HEK293 (cell line): ENCODE measurements at regions of chr14 and their contacts with region 1.

Region 1: DNA sequence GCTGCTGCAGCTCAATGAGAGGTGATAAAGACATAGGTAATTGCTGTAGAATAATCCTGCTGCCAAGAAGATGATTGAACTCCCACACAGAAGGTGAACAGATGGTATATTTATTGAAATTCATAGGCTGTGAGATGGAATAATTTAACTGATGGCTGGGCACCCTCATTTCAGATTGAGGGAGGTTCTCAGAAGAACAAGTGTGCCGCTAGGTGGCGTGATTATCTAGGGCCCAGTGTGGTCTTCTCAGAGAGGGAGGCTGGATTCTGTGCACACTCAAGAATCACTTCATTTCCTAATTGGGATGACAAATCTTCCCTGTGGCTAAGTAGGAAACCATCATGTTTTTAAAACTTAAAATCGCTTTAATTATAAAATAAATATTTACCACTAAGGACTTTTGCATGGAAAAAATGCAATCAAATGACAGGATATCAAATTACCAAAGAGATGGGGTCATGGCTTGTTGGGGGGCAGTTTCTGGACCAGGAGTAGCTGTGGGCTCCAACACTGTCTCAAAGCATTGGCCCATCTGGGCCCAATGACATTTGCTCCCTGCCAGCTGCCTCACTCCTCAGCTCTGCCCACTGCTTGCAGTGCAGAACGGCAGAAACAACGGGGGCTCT is 132.3 kb downstream of the SNAPC1 start:
- H3K4me3 ChIP-seq: no peak overlapping the region
- H3K27ac ChIP-seq: no peak overlapping the region
- H3K4me1 ChIP-seq: no peaks in the 10 kb centered on the region
- CTCF ChIP-seq: no peak

Region 2: DNA sequence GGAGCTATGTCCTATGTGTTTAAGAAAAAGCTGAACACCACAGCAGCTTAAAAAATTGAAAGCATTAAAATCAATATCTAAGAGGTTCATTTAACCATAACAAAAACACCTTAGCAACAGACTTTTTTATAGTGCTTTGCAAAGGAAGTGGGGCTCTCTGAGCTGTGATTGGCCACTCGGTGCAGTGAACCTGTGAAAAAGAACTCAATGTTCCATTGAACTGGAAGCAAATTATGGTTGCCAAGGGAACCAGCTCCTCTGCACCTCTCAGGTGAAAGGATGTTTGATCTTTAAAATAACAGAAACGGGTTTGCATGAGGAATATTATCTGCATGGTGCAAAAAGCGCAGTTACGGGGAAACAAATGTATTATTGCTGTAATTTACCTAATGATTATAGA is 17.0 kb after region 1 on chr14:
- CTCF ChIA-PET with region 1: interaction called, 13 read pairs
- POLR2A ChIA-PET with region 1: no interaction called
- H3K4me3 ChIP-seq: no peak overlapping the region
- H3K27ac ChIP-seq: no peak overlapping the region
- H3K4me1 ChIP-seq: no peaks in the 10 kb centered on the region
- CTCF ChIP-seq: no peak

Region 3: GRCh38 chr14:62117010-62117750 is 222.6 kb after region 1 on chr14:
- CTCF ChIA-PET with region 1: interaction called, 11 read pairs
- POLR2A ChIA-PET with region 1: no interaction called
- H3K4me3 ChIP-seq: peak overlapping the region; percentile 44
- H3K27ac ChIP-seq: no peak overlapping the region
- H3K4me1 ChIP-seq: no peaks in the 10 kb centered on the region
- CTCF ChIP-seq: peak; percentile 48

Region 4: DNA sequence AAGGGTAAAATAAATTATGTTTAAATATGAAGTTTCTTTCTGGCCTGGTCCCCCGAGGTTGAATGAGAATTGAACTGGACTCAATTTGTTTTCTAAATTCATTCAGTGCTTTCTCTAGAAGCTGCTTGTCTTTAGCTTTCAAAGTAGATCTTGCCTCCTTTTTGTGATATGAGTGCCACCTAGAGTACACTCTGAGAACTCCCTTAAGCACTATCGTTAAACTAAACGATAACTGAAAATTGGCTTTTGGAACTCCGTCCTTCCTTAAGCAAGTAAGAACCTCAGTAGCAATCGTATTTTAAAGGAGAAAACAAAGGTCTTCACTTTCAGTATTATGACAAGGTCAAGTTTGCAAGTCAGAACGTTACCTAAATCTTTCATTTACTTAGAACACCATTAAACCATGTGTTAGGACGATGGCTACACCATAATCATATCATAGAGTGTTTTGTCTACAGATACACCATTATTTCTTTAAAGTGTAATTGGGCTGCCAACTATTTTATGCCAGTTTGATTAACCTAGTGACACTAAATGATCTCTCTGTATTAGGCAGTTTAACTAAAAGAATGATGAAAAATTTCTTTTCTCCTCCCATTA is 232.4 kb after region 1 on chr14:
- CTCF ChIA-PET with region 1: interaction called, 63 read pairs
- POLR2A ChIA-PET with region 1: no interaction called
- H3K4me3 ChIP-seq: no peak overlapping the region
- H3K27ac ChIP-seq: no peak overlapping the region
- H3K4me1 ChIP-seq: no peaks in the 10 kb centered on the region
- CTCF ChIP-seq: peak; percentile 35; the same call in 1 of the 2 replicates